Heart left ventricle (tissue), 16 donors: ENCODE measurements at regions of chr10 and their contacts with region 1.

Region 1: DNA sequence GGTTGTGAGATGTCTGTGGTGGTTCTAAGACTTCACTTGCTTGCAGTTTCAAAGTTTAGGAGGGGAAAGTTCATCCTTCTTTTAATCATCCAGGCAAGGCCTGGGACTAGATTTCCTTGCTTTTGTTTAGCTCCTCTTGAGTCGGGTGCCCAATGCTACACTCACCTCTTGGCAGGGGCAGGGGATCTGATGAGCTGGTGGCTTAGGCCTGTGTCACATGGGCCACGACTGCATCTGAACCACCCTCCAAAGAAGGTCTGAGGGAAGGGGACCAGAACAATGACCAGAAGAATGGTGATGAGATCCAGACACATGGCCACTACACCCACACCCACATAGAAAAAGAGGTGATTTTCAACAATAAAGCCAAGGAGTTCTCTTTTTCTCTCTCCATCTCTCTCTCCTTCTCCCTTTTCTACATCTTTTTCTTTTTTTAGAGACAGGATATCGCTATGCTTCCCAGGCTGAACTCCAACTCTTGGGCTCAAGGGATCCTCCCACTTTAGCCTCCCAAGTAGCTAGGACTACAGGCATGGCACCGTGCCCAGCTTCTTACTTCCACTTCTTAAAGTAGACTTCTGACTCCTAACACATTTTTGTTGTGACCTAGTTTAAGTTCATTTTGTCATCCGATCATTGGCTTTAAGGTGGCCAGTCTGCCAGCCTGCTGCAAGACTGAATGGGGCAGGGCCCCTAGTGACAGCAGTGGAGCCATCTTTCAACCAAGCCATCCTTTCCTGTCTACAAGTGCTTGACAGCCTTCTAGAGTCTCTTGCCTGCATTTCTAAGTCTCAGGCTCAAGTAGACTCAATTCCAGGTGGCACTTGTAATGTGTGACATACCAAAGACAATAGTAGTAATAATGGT is 350.9 kb downstream of the RNLS start:
- DNase-seq: peak; percentile 83 to 93 (median 85)
- ATAC-seq: peak; percentile 11 to 63 (median 46)
- H3K4me3 ChIP-seq: no peak overlapping the region
- H3K27ac ChIP-seq: peak overlapping the region; percentile 24 to 75 (median 63)
- H3K4me1 ChIP-seq: peaks cover 0 to 65% (median 47%) of the 10 kb centered on the region in 12 donors
- H3K27me3 ChIP-seq: no peaks in the 10 kb centered on the region
- CTCF ChIP-seq: no peak
- POLR2A ChIP-seq: no peak

Region 2: DNA sequence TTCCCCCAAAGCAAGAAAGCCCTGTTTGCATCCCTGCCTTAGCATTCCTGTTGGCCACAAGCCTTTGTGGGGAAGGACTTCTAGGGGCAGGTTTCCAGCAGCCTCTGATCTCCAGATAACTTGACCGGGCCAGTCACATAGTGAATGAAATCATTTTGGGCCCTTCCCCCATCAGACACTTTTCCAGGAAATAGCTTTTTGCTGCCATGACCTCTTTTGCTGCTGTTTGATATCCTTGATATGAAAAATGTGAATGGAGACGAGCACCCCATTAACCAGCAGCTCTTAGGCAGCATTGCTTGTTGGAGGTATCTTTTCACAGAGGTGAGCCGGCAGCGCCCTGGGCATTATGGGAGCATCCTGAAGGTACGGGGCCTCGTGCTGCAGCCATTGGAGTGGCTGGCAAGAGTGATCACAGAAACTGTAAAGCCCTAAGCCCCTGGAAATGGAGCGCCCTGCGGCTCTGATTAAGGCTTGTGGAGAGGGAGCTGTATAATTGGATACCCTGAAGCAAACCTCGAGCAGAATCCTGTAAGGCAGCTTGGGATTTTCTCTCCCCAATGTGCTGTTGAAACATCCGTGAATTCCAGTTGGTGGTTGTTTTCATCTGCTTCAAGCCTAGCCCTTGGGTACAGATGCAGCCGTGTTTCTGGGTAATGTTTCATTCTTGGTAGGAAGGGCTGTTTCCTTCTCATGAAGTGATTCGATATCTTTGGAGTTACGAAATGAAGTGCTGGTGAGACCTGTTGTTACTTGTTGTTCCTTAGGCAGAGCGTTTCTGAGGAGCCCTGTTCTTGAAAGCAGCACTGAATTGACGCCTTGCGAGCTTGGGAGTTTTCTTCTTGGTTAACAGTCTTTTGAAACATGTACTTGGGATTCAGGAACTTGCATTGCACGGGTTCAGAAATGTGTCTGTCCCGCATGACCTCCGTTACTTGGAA is 189.8 kb before region 1 on chr10:
- intact Hi-C with region 1: loop called in 2 of 10 experiments (anchors 10 kb)
- DNase-seq: no peak
- ATAC-seq: peak in 2 of 4 donors; percentile 36 to 79
- H3K4me3 ChIP-seq: peak overlapping the region in 1 of 12 donors; percentile 20
- H3K27ac ChIP-seq: peak overlapping the region in 11 of 12 donors; percentile 0 to 69 (median 43)
- H3K4me1 ChIP-seq: peaks cover 0 to 62% (median 18%) of the 10 kb centered on the region in 12 donors
- H3K27me3 ChIP-seq: no peaks in the 10 kb centered on the region
- CTCF ChIP-seq: no peak
- POLR2A ChIP-seq: no peak

Region 3: GRCh38 chr10:88243836-88244730 is 11.8 kb after region 1 on chr10:
- intact Hi-C with region 1: loop called in 2 of 10 experiments (anchors 2 kb)
- DNase-seq: peak; percentile 84 to 90 (median 88)
- ATAC-seq: peak; percentile 89 to 97 (median 92)
- H3K4me3 ChIP-seq: peak overlapping the region in 9 of 12 donors; percentile 9 to 39 (median 28)
- H3K27ac ChIP-seq: peak overlapping the region; percentile 76 to 90 (median 84)
- H3K4me1 ChIP-seq: peaks cover 6 to 57% (median 40%) of the 10 kb centered on the region in 12 donors
- H3K27me3 ChIP-seq: no peaks in the 10 kb centered on the region
- CTCF ChIP-seq: no peak
- POLR2A ChIP-seq: no peak

Region 4: GRCh38 chr10:88254091-88254490 is 21.8 kb after region 1 on chr10:
- intact Hi-C with region 1: no loop called
- DNase-seq: peak in 1 of 5 donors; percentile 41
- ATAC-seq: peak in 2 of 4 donors; percentile 63 to 67
- H3K4me3 ChIP-seq: no peak overlapping the region
- H3K27ac ChIP-seq: peak overlapping the region in 3 of 12 donors; percentile 23 to 84 (median 73)
- H3K4me1 ChIP-seq: peaks cover 0 to 44% (median 4%) of the 10 kb centered on the region in 12 donors
- H3K27me3 ChIP-seq: no peaks in the 10 kb centered on the region
- CTCF ChIP-seq: no peak
- POLR2A ChIP-seq: no peak